Common myeloid progenitor, CD34-positive (primary cell): ENCODE measurements at regions of chr1 and their contacts with region 1.

Region 1: DNA sequence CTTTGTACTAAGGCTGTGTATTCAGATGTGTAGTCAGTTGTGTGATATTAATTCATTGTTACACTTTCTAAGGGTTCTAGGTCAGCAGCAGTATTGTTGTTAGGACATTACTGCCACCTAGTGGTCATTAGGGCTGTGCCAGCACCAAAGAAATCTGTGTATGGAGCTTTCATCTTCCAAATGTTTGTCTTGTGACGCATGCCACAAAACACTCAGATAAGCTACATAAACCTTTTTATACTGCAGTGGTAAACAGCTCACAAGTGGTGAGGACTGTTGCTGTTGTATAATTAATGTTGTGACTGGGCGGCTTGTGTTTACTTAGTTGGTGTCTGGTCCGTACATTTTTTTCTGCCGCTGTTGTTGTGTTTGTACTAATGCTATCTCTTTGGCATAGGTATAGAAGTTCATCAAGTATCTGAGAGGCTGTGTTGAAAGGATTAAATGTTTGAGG is 51.7 kb downstream of the S1PR1 start:
- DNase-seq: peak; percentile 76 to 86 (median 84)
- H3K4me3 ChIP-seq: no peak overlapping the region
- H3K27ac ChIP-seq: no peak overlapping the region
- H3K4me1 ChIP-seq: peaks cover 15 to 51% (median 42%) of the 10 kb centered on the region in 4 experiments
- H3K27me3 ChIP-seq: no peaks in the 10 kb centered on the region

Region 2: DNA sequence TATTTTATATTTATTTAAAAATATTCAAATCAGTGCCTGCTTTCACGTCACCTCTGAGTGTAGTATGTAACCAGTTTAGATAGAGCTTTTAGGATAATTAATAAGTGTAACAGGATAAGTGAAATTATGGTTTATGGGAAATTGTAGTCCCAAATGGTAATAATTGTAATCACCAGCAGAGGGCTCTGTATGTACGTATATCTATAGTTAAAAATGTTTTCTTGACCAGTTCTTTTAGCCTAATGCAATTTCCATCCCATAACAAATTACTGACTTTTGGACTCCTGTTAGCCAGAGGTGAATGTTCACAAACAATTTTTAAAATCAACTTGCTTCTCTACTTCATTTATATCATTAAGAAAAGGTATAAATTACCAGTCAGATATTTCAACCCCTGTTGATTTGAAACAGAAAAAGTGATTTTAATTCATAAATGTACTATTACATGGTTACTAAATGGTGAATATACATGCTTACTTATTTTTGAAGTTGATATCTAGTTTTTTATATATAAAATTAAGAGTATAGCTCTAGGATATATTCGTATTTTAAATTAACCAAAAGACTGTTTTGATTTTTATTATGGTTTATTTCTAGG is 367.3 kb before region 1 on chr1:
- CTCF ChIA-PET with region 1: interaction called, 20 read pairs
- POLR2A ChIA-PET with region 1: no interaction called
- DNase-seq: peak; percentile 53 to 67 (median 58)
- H3K4me3 ChIP-seq: no peak overlapping the region
- H3K27ac ChIP-seq: no peak overlapping the region
- H3K4me1 ChIP-seq: no peaks in the 10 kb centered on the region
- H3K27me3 ChIP-seq: no peaks in the 10 kb centered on the region

Region 3: DNA sequence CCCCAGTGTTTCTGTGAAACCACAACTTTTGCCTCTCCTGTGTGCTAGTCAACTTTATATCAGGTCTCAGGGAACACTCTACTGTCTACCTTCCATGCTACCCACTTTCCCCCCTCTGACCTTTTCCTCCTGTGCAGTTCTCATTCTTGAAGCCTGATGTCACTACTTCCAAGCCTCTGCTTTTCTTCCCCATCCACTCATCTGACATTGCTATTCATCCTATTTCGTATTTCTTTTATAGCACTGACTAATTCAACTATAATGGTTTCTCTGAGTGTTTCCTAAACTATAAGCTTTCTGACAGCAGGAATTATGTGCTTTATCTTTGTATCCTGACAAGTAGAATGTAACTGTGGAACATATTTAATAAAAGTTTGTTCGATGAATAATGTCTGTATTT is 244.7 kb before region 1 on chr1:
- CTCF ChIA-PET with region 1: interaction called, 36 read pairs
- POLR2A ChIA-PET with region 1: no interaction called
- DNase-seq: peak; percentile 47 to 71 (median 68)
- H3K4me3 ChIP-seq: no peak overlapping the region
- H3K27ac ChIP-seq: no peak overlapping the region
- H3K4me1 ChIP-seq: no peaks in the 10 kb centered on the region
- H3K27me3 ChIP-seq: no peaks in the 10 kb centered on the region

Region 4: DNA sequence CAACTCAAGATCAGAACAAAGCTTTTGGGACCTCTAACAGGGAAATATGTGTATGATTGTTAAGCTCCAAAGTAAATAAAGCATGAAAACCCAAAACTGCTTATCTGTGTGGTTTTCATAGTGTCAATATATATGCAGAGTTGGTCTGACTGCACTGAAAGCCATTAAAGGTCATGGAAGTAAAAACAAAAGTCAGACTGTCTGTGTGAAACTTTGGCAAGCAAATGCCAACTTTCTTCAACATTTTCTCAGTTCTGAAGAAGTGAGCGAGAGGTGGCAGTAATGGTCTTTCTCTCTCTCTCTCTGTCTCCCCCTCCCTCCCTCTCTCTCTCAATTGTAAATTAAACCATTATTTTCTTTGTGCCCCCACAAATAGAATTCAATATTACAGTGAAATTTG is 151.8 kb before region 1 on chr1:
- CTCF ChIA-PET with region 1: interaction called, 13 read pairs
- POLR2A ChIA-PET with region 1: no interaction called
- DNase-seq: peak in 2 of 3 donors; percentile 36 to 50
- H3K4me3 ChIP-seq: peak overlapping the region in 1 of 7 experiments; percentile 12
- H3K27ac ChIP-seq: no peak overlapping the region
- H3K4me1 ChIP-seq: peaks cover 14 to 33% (median 22%) of the 10 kb centered on the region in 4 experiments
- H3K27me3 ChIP-seq: no peaks in the 10 kb centered on the region

Region 5: DNA sequence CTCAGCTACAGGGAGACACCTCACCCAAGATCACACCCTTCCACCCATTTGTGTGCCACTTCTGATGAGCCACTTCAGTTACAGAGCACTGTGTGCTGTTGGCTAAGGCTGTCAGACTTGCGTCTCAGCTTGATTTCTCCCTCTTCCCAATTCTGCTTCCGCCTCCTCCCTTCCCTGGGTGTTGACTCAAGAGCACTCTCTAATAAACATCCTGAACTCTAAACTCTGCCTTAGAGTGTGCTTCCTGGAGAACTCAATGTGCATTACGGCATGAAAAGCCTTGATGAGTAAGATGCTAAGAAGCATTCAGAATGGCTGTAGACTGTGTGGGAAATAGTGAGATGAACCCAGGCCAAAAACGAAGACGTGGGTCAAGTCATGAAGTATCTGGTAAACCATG is 106.6 kb before region 1 on chr1:
- CTCF ChIA-PET with region 1: no interaction called
- POLR2A ChIA-PET with region 1: no interaction called
- DNase-seq: no peak
- H3K4me3 ChIP-seq: no peak overlapping the region
- H3K27ac ChIP-seq: no peak overlapping the region
- H3K4me1 ChIP-seq: peaks cover 0 to 16% (median 4%) of the 10 kb centered on the region in 4 experiments
- H3K27me3 ChIP-seq: no peaks in the 10 kb centered on the region

Region 6: GRCh38 chr1:101247404-101248287 is 40.9 kb before region 1 on chr1:
- CTCF ChIA-PET with region 1: interaction called, 213 read pairs
- POLR2A ChIA-PET with region 1: no interaction called
- DNase-seq: peak in 1 of 3 donors; percentile 12
- H3K4me3 ChIP-seq: no peak overlapping the region
- H3K27ac ChIP-seq: no peak overlapping the region
- H3K4me1 ChIP-seq: peaks cover 0 to 11% (median 0%) of the 10 kb centered on the region in 4 experiments
- H3K27me3 ChIP-seq: no peaks in the 10 kb centered on the region

Region 7: DNA sequence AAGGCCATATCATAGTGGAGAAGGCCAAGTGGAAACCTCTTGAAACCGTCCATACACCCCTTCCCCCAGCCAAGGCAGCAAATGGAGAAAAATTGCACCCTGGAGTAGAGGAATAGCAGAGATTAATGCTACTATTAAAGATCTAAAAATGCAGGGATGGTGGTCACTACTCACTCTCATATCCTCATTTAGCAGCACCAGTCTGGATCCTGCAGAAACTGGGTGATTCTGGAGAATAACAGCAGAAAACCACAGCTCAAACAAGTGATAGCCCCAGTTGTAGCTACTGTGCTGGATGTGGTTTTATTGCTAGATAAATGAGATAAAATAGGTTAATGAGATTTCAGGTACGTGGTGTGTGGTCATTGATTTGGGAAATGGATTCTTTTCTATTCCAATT is 21.4 kb before region 1 on chr1:
- CTCF ChIA-PET with region 1: interaction called, 10 read pairs
- POLR2A ChIA-PET with region 1: no interaction called
- DNase-seq: no peak
- H3K4me3 ChIP-seq: no peak overlapping the region
- H3K27ac ChIP-seq: no peak overlapping the region
- H3K4me1 ChIP-seq: peaks cover 17 to 33% (median 30%) of the 10 kb centered on the region in 4 experiments
- H3K27me3 ChIP-seq: no peaks in the 10 kb centered on the region

Region 8: GRCh38 chr1:101309334-101310311 is 21.1 kb after region 1 on chr1:
- CTCF ChIA-PET with region 1: interaction called, 26 read pairs
- POLR2A ChIA-PET with region 1: interaction called, 6 read pairs
- DNase-seq: peak; percentile 85 to 95 (median 93)
- H3K4me3 ChIP-seq: peak overlapping the region in 6 of 7 experiments; percentile 40 to 71 (median 62)
- H3K27ac ChIP-seq: peak overlapping the region; percentile 18 to 58
- H3K4me1 ChIP-seq: peaks cover 19 to 43% (median 34%) of the 10 kb centered on the region in 4 experiments
- H3K27me3 ChIP-seq: no peaks in the 10 kb centered on the region